CD4-positive, alpha-beta T cell (primary cell): ENCODE measurements at regions of chr2 and their contacts with region 1.

Region 1: DNA sequence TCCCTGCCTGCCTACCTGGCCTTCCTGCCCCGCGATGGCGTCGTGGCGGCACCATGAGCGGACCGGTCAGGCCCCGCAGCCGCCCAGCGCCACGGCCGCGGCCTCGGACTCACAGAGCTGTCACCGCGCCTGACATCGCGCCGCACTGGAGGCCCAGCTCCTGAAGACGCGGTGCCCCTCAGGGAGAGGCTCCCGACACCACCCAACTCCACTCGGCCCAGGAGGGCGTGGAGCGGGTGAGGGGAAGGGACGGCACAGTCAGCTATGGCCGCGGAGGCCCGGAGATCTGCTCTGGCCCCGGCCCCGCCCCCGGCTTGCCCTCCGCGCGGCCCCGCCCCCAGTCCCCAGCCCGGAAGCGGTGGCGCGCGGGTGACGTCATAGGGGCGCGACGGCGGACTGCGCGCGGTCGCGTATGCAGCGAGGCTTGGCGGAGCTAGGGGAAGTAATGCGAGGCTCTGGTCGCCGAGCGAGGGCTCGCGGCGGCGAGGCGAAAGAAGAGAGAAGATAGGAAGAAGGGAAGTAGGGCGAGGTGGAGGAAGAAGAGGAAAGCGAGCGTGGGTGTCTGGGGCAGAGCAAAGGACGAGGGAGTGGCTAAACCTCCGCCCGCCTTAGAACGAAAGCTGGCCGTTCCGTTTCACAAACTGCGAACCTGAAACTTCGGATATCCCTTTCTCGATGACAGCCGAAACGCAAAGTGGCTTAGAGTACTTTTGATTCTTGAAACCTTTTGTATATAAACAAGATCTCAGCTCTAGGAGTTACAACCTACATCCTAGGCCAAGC is at the start of gene SLC35F5:
- DNase-seq: peak; percentile 84 to 97 (median 92)
- ATAC-seq: peak; percentile 90
- H3K4me3 ChIP-seq: peak within 1 kb of the TSS; percentile 74
- H3K4me3 Mint-ChIP-seq: peak within 1 kb of the TSS; percentile 94
- H3K27ac ChIP-seq: peak within 1 kb of the TSS; percentile 84 to 95
- H3K27ac Mint-ChIP-seq: peak within 1 kb of the TSS; percentile 95
- H3K4me1 ChIP-seq: peaks cover 14% of the 10 kb centered on the region
- H3K4me1 Mint-ChIP-seq: peaks cover 33% of the 10 kb centered on the region
- H3K27me3 ChIP-seq: no peaks in the 10 kb centered on the region
- H3K27me3 Mint-ChIP-seq: no peaks in the 10 kb centered on the region
- CTCF ChIP-seq: no peak
- total RNA-seq, gene SLC35F5: 18.3 to 19.2 TPM

Region 2: DNA sequence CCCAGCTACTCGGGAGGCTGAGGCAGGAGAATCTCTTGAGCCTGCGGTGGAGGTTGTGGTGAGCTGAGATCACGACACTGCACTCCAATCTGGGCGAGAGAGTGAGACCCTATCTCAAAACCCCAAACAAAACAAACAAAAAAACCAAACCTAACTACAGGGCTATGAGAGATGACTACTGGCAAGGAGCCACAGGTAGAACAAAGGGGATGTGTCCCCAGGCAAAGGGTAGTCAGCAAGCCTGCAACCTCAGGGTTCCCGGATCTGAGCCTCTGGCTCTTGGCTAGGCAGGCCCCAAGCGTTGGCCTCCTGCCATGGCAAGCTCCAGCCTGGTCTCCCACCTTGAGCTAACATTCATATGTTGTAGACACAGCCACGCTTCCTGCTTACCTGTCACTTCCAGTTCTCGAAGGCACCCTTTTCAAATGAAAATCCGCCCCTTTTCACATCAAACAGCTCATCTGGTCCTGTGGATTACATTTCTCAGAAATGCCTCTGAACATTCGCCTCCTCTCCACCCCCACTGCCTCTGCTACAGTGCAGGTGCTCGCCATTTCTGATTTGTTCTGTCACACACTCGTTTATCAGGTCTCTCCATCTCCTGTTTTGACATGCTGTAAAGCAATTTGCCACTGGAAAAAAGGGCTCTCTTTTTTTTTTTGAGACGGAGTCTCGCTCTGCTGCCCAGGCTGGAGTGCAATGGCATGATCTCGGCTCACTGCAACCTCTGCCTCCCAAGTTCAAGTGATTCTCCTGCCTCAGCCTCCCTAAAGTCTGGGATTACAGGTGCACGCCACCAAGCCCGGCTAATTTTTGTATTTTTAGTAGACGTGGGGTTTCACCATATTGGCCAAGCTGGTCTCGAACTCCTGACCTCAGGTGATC is 120.2 kb after region 1 on chr2:
- CTCF ChIA-PET with region 1: no interaction called
- POLR2A ChIA-PET with region 1: interaction called, 26 read pairs
- intact Hi-C with region 1: loop called in 1 of 2 experiments (anchors 5 kb)
- DNase-seq: peak; percentile 48 to 89 (median 74)
- ATAC-seq: peak; percentile 89
- H3K4me3 ChIP-seq: peak overlapping the region; percentile 11
- H3K4me3 Mint-ChIP-seq: peak overlapping the region; percentile 36
- H3K27ac ChIP-seq: peak overlapping the region; percentile 68 to 73
- H3K27ac Mint-ChIP-seq: peak overlapping the region; percentile 87
- H3K4me1 ChIP-seq: peaks cover 21% of the 10 kb centered on the region
- H3K4me1 Mint-ChIP-seq: peaks cover 59% of the 10 kb centered on the region
- H3K27me3 ChIP-seq: no peaks in the 10 kb centered on the region
- H3K27me3 Mint-ChIP-seq: no peaks in the 10 kb centered on the region
- CTCF ChIP-seq: no peak

Region 3: GRCh38 chr2:114283774-114284173 is 527.2 kb after region 1 on chr2:
- CTCF ChIA-PET with region 1: no interaction called
- POLR2A ChIA-PET with region 1: no interaction called
- intact Hi-C with region 1: no loop called
- DNase-seq: no peak
- ATAC-seq: no peak
- H3K4me3 ChIP-seq: no peak overlapping the region
- H3K4me3 Mint-ChIP-seq: no peak overlapping the region
- H3K27ac ChIP-seq: no peak overlapping the region
- H3K27ac Mint-ChIP-seq: no peak overlapping the region
- H3K4me1 ChIP-seq: no peaks in the 10 kb centered on the region
- H3K4me1 Mint-ChIP-seq: no peaks in the 10 kb centered on the region
- H3K27me3 ChIP-seq: no peaks in the 10 kb centered on the region
- H3K27me3 Mint-ChIP-seq: peaks cover 26% of the 10 kb centered on the region
- CTCF ChIP-seq: no peak